ENCODE measurements at regions of chr5 and their contacts with region 1.

Region 1: GRCh38 chr5:270340-270739 is 1.1 kb upstream of the PDCD6 start:
- DNase-seq: peak in 2 of 9 experiments; percentile 18 to 27
- ATAC-seq: no peak
- H3K4me3 ChIP-seq: peak overlapping the region in 1 of 2 experiments; percentile 82
- H3K4me3 Mint-ChIP-seq: peak overlapping the region; percentile 85
- H3K27ac ChIP-seq: no peak overlapping the region
- H3K27ac Mint-ChIP-seq: peak overlapping the region; percentile 64
- H3K4me1 ChIP-seq: no peaks in the 10 kb centered on the region
- H3K4me1 Mint-ChIP-seq: peaks cover 37% of the 10 kb centered on the region
- H3K27me3 ChIP-seq: no peaks in the 10 kb centered on the region
- H3K27me3 Mint-ChIP-seq: no peaks in the 10 kb centered on the region
- CTCF ChIP-seq: no peak

Region 2: GRCh38 chr5:217860-218456 is 52.4 kb before region 1 on chr5 and contains the starts of genes CCDC127 and SDHA:
- CTCF ChIA-PET with region 1: interaction called, 3 read pairs
- POLR2A ChIA-PET with region 1: interaction called, 15 read pairs
- intact Hi-C with region 1: loop called (anchors 1 kb)
- DNase-seq: peak; percentile 94 to 99 (median 99)
- ATAC-seq: peak; percentile 85
- H3K4me3 ChIP-seq: peak within 1 kb of the TSS; percentile 52 to 83
- H3K4me3 Mint-ChIP-seq: peak within 1 kb of the TSS; percentile 95
- H3K27ac ChIP-seq: peak within 1 kb of the TSS; percentile 70 to 87
- H3K27ac Mint-ChIP-seq: peak within 1 kb of the TSS; percentile 95
- H3K4me1 ChIP-seq: peaks cover 22% of the 10 kb centered on the region
- H3K4me1 Mint-ChIP-seq: peaks cover 52% of the 10 kb centered on the region
- H3K27me3 ChIP-seq: no peaks in the 10 kb centered on the region
- H3K27me3 Mint-ChIP-seq: no peaks in the 10 kb centered on the region
- CTCF ChIP-seq: peak; percentile 33
- total RNA-seq, gene CCDC127: 1.5 to 2.2 TPM
- total RNA-seq, gene SDHA: 203 to 216 TPM

Region 3: DNA sequence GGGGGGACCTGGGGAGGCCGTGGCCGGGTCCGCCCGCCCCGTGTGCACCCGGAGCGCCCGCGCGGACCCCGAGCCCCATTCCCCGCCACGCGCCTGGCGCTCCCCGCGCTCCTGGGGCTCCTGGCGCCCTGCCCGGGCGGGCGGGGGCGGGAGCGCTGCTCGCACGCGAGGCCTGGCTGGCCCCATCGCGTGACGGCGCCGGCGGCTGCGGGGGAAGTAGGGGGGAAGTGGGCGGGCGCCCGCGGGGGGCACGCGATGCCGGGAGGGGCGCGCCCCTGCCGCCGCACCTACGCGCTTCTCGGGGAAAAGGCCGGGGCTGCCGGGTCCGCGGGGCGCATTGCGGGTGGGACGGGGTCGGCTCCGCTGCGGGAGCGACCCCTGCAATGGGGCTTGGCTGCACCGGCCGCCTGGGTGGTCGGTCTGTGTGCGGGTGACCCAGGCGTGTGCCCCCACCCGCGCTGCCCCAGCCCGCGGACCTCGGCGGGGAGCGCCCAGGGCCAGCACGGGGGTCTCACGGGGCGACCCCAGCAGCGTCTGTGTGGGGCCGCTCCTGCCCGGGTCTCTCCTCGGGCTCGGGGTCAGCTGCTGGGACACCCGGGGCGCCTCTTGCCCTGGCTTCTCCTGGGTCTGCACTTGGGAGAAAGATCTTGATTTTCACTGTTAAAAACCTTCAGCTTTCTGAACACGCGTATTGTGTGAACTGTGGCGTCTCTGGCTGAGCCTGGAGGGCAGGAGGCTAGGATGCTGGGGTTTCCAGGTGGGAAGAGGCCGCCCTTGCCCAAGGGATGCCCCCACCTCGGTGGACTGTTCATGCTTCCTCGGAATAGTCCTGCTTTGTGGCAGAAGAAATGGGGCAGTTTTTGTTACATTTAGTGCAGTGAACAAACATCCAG is 103.6 kb after region 1 on chr5:
- CTCF ChIA-PET with region 1: no interaction called
- POLR2A ChIA-PET with region 1: no interaction called
- intact Hi-C with region 1: no loop called
- DNase-seq: peak in 8 of 9 experiments; percentile 45 to 87 (median 71)
- ATAC-seq: peak; percentile 86
- H3K4me3 ChIP-seq: peak overlapping the region in 1 of 2 experiments; percentile 19
- H3K4me3 Mint-ChIP-seq: peak overlapping the region; percentile 59
- H3K27ac ChIP-seq: no peak overlapping the region
- H3K27ac Mint-ChIP-seq: peak overlapping the region; percentile 22
- H3K4me1 ChIP-seq: peaks cover 28% of the 10 kb centered on the region
- H3K4me1 Mint-ChIP-seq: peaks cover 17% of the 10 kb centered on the region
- H3K27me3 ChIP-seq: peaks cover 0 to 5% of the 10 kb centered on the region in 2 experiments
- H3K27me3 Mint-ChIP-seq: peaks cover 2% of the 10 kb centered on the region
- CTCF ChIP-seq: no peak

Region 4: DNA sequence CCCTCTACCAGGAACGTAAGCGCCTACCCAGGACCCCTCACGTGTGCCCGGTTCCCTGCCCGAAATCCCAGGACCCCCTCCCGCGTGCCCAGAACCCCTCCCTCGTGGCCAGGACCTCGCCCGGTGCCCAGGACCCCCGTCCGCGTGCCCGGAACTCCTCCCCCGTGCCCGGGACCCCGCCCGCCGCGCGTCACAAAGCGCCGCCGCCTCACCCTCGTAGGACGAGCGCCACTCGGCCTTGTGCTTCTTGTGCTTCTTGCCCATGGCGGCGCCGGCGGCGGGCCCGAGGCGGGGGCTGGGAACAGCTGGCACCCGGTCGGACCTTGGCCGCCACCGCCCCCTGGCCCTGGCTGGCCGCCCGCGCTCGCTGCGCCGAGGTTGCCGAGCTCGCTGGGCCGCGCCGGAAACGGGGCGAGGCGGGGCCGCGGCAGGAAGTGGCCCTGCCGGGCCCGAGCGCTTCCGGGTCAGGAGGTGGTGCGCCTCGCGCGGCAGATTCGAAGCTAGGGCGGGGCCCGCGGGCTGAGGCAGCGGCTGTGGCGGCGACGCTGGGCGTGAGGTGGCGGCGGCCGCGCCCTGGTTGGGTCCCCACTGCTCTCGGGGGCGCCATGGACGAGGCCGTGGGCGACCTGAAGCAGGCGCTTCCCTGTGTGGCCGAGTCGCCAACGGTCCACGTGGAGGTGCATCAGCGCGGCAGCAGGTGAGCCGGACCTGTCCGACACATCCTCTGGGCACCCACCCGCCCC is 622.2 kb after region 1 on chr5 and contains the starts of genes BRD9 and TRIP13:
- CTCF ChIA-PET with region 1: no interaction called
- POLR2A ChIA-PET with region 1: no interaction called
- intact Hi-C with region 1: loop called in 1 of 2 experiments (anchors 1 kb)
- DNase-seq: peak; percentile 68 to 92 (median 81)
- ATAC-seq: peak; percentile 94
- H3K4me3 ChIP-seq: peak within 1 kb of the TSS; percentile 85 to 90
- H3K4me3 Mint-ChIP-seq: peak within 1 kb of the TSS; percentile 85
- H3K27ac ChIP-seq: peak within 1 kb of the TSS; percentile 74 to 77
- H3K27ac Mint-ChIP-seq: peak within 1 kb of the TSS; percentile 91
- H3K4me1 ChIP-seq: peaks cover 17% of the 10 kb centered on the region
- H3K4me1 Mint-ChIP-seq: peaks cover 22% of the 10 kb centered on the region
- H3K27me3 ChIP-seq: no peaks in the 10 kb centered on the region
- H3K27me3 Mint-ChIP-seq: no peaks in the 10 kb centered on the region
- CTCF ChIP-seq: no peak
- total RNA-seq, gene BRD9: 99.8 to 108 TPM
- total RNA-seq, gene TRIP13: 0.33 to 0.76 TPM

Measured in CD8-positive, alpha-beta T cell (primary cell).